Activated CD4-positive, alpha-beta memory T cell treated with anti-CD3 and anti-CD28 coated beads, Interleukin-2, amount 10 ng/mL, durations not matched to agents 7 days and 5 days (primary cell): ENCODE measurements at regions of chr14 and their contacts with region 1.

Region 1: DNA sequence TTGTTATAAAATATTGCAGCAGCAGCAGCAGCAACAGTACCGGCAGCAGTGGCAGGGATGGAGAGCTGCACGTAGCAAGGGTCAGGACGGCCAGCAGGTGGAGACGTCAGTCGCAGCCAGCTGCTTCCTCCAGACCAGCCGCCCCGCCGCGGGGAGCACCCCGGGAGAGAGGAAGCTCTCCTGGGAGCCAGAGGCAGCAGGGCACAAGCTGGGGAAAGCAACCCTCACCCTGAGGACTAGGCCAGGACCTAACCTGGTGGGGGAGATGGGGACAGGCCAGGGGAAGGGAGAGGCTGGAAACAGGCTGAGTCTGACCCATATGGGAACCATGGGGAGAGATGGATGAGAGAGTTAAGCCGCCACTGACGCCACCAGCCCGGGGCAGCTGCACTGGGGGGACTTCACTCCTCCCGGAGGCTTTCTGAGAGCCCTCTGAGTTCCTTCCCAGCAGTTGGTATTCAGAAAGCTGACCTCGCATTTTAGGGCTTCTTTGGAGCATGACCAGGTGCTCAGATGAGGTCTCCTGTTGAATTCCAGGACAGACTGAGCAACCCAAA is 56.3 kb downstream of the SPTB start:
- DNase-seq: peak; percentile 69
- H3K4me3 Mint-ChIP-seq: no peak overlapping the region
- H3K27ac Mint-ChIP-seq: no peak overlapping the region
- H3K4me1 Mint-ChIP-seq: peaks cover 5% of the 10 kb centered on the region
- H3K27me3 Mint-ChIP-seq: peaks cover 48% of the 10 kb centered on the region

Region 2: DNA sequence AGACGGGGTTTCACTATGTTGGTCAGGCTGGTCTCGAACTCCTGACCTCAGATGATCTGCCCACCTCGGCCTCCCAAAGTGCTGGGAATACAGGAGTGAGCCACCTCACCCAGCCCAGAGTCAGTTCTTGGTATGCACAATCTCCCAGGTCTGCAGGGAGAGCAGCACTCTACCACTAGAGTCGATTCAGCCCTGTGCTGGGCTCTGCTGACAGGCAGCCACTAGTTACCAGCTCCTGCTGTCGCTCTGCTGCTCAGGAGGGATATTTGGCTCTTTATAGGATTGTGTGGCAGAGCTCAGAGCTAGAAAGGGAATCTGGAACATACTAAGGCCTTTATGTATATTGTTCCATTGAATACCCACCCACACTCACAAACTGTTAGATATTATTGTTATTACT is 12.0 kb after region 1 on chr14:
- CTCF ChIA-PET with region 1: interaction called, 10 read pairs
- POLR2A ChIA-PET with region 1: interaction called, 3 read pairs
- DNase-seq: no peak
- H3K4me3 Mint-ChIP-seq: no peak overlapping the region
- H3K27ac Mint-ChIP-seq: no peak overlapping the region
- H3K4me1 Mint-ChIP-seq: no peaks in the 10 kb centered on the region
- H3K27me3 Mint-ChIP-seq: peaks cover 27% of the 10 kb centered on the region

Region 3: DNA sequence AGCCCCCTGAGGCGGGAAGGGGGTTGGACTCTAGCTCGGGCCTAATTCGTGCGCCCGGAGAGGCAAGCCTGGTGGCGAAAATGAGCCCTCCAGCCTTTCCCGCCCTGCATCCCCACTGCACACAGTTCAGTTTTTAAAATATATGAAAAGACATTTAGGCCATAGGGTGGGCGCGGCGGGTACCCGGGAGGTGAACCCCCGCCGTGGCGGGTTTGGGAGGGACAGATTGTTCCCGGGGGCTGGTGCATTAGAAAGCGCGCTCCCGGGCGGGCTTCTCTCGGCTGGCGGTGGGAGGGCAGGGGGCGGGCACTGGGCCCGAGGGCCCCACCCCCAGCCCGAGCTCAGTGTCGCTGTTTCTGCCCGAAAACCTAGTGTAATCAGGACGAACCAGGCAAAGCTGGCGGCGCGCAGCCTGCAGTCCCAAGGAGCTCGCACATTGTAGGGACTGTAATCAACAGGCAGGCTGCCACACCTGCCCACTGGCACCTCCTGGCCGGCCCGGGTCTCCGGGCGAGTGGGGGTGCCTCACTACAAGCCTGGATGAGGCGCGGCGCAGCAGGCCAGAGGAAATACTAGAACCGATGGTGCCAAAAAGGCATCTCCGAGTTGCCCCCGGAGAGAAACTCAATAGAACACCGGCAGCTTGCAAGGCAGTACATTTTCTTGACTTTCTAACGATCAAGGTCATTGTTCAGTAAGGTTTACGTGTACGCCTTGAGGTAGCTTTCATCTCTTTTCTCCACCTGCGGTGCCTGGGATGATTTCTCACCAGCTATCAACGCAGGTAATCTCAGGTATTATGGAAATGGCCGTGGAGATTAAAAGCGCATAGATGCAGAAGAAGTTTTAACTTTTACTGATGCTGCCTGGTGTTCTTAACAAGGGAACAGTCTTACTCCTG is 57.1 kb after region 1 on chr14:
- CTCF ChIA-PET with region 1: interaction called, 10 read pairs
- POLR2A ChIA-PET with region 1: no interaction called
- DNase-seq: peak; percentile 63
- H3K4me3 Mint-ChIP-seq: peak overlapping the region; percentile 73
- H3K27ac Mint-ChIP-seq: no peak overlapping the region
- H3K4me1 Mint-ChIP-seq: peaks cover 11% of the 10 kb centered on the region
- H3K27me3 Mint-ChIP-seq: peaks cover 68% of the 10 kb centered on the region